ENCODE measurements at regions of chr9 and their contacts with region 1.

Region 1: GRCh38 chr9:73081979-73082657 is 69.5 kb upstream of the ANXA1 start:
- DNase-seq: no peak
- H3K4me3 ChIP-seq: no peak overlapping the region
- H3K27ac ChIP-seq: no peak overlapping the region
- H3K4me1 ChIP-seq: no peaks in the 10 kb centered on the region
- H3K27me3 ChIP-seq: no peaks in the 10 kb centered on the region
- CTCF ChIP-seq: peak; percentile 55 to 65 (median 62)
- POLR2A ChIP-seq: no peak

Region 2: GRCh38 chr9:72271613-72272478 is 810.3 kb before region 1 on chr9:
- intact Hi-C with region 1: loop called (anchors 10 kb)
- DNase-seq: peak; percentile 51
- H3K4me3 ChIP-seq: no peak overlapping the region
- H3K27ac ChIP-seq: no peak overlapping the region
- H3K4me1 ChIP-seq: no peaks in the 10 kb centered on the region
- H3K27me3 ChIP-seq: no peaks in the 10 kb centered on the region
- CTCF ChIP-seq: peak; percentile 75 to 89 (median 80)
- POLR2A ChIP-seq: no peak

Region 3: GRCh38 chr9:72856972-72857623 is 225.0 kb before region 1 on chr9:
- intact Hi-C with region 1: loop called (anchors 5 kb)
- DNase-seq: peak; percentile 27
- H3K4me3 ChIP-seq: no peak overlapping the region
- H3K27ac ChIP-seq: no peak overlapping the region
- H3K4me1 ChIP-seq: no peaks in the 10 kb centered on the region
- H3K27me3 ChIP-seq: no peaks in the 10 kb centered on the region
- CTCF ChIP-seq: peak; percentile 10 to 63 (median 58)
- POLR2A ChIP-seq: no peak

Region 4: GRCh38 chr9:72871685-72872084 is 210.4 kb before region 1 on chr9:
- intact Hi-C with region 1: loop called (anchors 2 kb)
- DNase-seq: no peak
- H3K4me3 ChIP-seq: no peak overlapping the region
- H3K27ac ChIP-seq: no peak overlapping the region
- H3K4me1 ChIP-seq: no peaks in the 10 kb centered on the region
- H3K27me3 ChIP-seq: no peaks in the 10 kb centered on the region
- CTCF ChIP-seq: peak in 3 of 4 experiments; percentile 48 to 68 (median 62)
- POLR2A ChIP-seq: no peak

Region 5: DNA sequence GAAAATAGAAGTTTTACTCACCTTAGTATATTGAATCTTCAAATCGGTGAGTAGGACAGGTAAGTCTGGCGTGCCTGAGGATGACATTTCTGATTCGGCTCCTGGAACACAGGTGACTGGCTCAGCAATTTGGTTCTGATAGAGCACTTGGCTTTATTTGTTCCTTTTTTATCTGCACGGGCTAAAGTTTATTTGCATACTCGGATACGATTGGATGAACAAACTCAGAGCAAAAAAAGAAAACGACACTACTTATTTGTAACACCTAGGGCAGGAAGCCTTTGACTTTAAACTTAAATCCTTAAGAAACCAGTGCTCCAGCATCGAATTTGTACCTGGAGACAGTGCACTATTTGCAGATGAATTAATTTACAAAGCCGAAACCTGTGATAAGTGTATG is 129.2 kb before region 1 on chr9 and contains the start of gene ALDH1A1:
- intact Hi-C with region 1: no loop called
- DNase-seq: peak; percentile 40
- H3K4me3 ChIP-seq: peak within 1 kb of the TSS; percentile 7 to 11
- H3K27ac ChIP-seq: peak within 1 kb of the TSS; percentile 22 to 38
- H3K4me1 ChIP-seq: no peaks in the 10 kb centered on the region
- H3K27me3 ChIP-seq: peaks cover 5% of the 10 kb centered on the region
- CTCF ChIP-seq: no peak
- POLR2A ChIP-seq: no peak
- total RNA-seq, gene ALDH1A1: 16.8 to 427 TPM

Region 6: GRCh38 chr9:73023025-73023541 is 59.0 kb before region 1 on chr9:
- intact Hi-C with region 1: loop called (anchors 5 kb)
- DNase-seq: peak; percentile 19
- H3K4me3 ChIP-seq: no peak overlapping the region
- H3K27ac ChIP-seq: no peak overlapping the region
- H3K4me1 ChIP-seq: no peaks in the 10 kb centered on the region
- H3K27me3 ChIP-seq: no peaks in the 10 kb centered on the region
- CTCF ChIP-seq: peak; percentile 63 to 78 (median 76)
- POLR2A ChIP-seq: no peak

Region 7: DNA sequence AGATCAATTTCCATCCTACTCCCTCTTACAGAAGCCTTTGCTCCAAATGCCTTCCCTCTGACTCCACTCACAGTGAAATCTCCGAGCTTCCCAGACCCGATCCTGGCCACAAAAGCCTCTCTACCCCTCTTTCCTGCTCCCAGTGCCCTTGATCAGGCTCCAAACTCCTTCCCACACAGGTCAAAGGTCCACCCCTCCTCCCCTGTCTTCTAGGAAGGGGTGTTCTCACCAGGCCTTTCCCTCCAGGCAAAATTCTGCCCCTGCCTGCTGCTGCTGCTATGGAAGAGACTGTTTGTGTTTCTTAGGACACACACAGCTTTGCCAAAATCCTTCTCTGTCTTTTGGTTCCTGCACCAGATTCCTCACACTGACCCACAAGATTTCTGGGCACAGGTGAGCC is 43.5 kb before region 1 on chr9:
- intact Hi-C with region 1: loop called (anchors 5 kb)
- DNase-seq: no peak
- H3K4me3 ChIP-seq: no peak overlapping the region
- H3K27ac ChIP-seq: peak overlapping the region; percentile 54 to 67
- H3K4me1 ChIP-seq: no peaks in the 10 kb centered on the region
- H3K27me3 ChIP-seq: no peaks in the 10 kb centered on the region
- CTCF ChIP-seq: no peak
- POLR2A ChIP-seq: no peak